GM10248 (cell line): ENCODE measurements at regions of chr16 and their contacts with region 1.

Region 1: GRCh38 chr16:53235851-53236250 is 181.1 kb downstream of the CHD9 start:
- DNase-seq: no peak
- CTCF ChIP-seq: no peak

Region 2: GRCh38 chr16:53257001-53257400 is 21.1 kb after region 1 on chr16:
- CTCF ChIA-PET with region 1: interaction called, 10 read pairs
- POLR2A ChIA-PET with region 1: no interaction called
- DNase-seq: no peak
- CTCF ChIP-seq: no peak

Region 3: GRCh38 chr16:53281280-53281679 is 45.4 kb after region 1 on chr16:
- CTCF ChIA-PET with region 1: no interaction called
- POLR2A ChIA-PET with region 1: no interaction called
- DNase-seq: no peak
- CTCF ChIP-seq: no peak